AG04450 (cell line): ENCODE measurements at regions of chr17 and their contacts with region 1.

Region 1: DNA sequence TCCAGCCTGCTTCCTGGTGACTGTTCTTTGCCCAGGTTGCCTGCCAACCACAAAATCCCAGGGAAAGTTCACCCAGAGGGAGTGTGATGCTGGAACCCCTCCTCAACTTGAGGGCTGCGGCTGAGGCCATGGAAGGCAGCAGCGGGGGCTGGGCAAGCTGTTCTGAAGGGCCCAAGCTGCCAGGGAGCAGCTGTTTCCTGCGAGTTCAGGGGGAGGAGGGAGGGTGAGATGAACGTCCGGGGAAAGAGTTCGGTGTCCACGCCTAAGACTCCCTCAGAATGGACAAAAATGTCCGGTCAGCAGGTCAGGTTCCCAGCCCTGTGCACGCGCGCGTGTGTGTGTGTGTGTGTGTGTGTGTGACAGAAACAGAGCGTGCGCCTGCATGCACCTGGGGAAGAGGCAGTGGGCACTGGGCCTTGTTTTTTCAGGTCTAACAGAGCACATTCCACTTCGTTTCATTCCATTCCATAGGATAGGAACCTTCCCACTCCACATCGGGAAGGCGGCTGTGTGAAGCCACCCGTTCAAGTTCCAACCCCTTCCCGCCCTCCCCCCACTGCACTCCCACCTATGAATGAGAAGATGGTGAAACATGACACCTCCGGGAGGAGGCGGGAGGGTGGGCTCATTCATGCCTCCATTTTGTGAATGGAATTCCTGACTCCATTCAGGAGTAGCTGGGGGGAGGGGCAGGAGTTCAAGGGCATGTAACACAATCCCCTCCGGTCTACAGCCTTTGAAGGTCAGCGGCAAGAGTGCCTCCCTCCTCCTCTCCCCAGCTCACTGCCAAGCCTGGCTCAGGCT is 15.7 kb downstream of the ETV4 start:
- DNase-seq: peak; percentile 90
- H3K4me3 ChIP-seq: peak overlapping the region; percentile 48
- H3K27ac ChIP-seq: peak overlapping the region; percentile 94
- H3K27me3 ChIP-seq: no peaks in the 10 kb centered on the region
- CTCF ChIP-seq: no peak

Region 2: DNA sequence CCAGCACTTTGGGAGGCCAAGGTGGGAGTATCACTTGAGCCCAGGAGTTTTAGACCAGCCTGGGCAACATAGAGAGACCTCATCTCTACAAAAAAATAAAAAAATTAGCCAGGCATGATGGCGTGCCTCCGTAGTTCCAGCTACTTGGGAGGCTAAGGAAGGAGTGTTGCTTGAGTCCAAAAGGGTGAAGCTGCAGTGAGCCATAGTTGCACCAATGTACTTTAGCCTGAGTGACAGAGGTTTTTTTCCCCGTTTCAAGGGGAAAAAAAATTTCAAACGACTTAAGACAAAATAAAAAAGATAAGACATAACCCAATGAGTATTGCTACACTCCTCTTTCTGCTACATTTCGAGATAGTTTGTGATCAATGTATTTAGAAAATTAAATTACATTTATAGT is 39.9 kb before region 1 on chr17:
- CTCF ChIA-PET with region 1: no interaction called
- POLR2A ChIA-PET with region 1: no interaction called
- DNase-seq: no peak
- H3K4me3 ChIP-seq: no peak overlapping the region
- H3K27ac ChIP-seq: no peak overlapping the region
- H3K27me3 ChIP-seq: no peaks in the 10 kb centered on the region
- CTCF ChIP-seq: no peak

Region 3: DNA sequence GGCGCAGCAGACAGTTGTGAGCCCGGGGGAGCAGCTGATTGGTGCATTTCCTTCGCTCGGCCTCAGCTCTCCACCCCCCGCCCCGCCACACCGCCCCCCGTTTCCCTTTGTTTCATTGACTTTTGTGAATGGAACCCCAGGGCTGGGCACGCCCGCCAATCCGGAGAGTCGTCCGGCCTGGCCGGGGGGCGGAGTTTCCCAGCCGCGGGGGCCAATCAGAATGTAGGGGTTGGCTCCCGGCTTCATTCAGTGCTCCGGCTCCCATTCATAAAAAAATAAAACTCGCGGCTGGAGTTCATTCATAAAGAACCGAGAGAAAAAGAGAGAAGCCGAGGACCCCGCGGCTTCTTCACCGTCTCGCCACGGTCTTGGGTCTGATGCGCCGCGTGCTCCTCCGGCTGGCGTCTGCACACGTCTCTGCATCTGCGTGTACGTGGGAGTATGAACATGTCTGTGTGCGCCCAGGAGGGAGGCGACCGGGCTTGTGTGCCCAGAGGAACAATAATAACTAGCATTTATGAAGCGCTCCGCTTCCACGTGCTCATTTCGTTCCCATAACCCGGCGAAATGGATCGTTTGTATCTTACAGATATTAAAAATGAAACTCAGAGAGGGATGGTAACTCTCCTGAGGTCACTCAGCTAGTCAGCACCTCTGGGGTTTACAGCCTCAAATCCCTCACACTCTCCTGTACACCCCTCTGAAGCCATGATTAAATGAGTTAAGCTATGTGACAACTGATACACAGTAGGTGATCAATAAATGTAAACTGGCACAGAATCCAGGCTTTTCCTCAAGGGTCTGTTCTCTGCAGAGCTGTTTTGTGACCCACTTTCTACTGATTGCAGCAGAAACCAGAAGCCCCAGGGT is 16.1 kb after region 1 on chr17 and contains the start of gene ETV4:
- CTCF ChIA-PET with region 1: no interaction called
- POLR2A ChIA-PET with region 1: interaction called, 18 read pairs
- DNase-seq: peak; percentile 78
- H3K4me3 ChIP-seq: peak within 1 kb of the TSS; percentile 68
- H3K27ac ChIP-seq: peak within 1 kb of the TSS; percentile 81
- H3K27me3 ChIP-seq: no peaks in the 10 kb centered on the region
- CTCF ChIP-seq: no peak
- polyA plus RNA-seq, gene ETV4: 6.7 and 8.0 TPM in 2 replicates

Region 4: DNA sequence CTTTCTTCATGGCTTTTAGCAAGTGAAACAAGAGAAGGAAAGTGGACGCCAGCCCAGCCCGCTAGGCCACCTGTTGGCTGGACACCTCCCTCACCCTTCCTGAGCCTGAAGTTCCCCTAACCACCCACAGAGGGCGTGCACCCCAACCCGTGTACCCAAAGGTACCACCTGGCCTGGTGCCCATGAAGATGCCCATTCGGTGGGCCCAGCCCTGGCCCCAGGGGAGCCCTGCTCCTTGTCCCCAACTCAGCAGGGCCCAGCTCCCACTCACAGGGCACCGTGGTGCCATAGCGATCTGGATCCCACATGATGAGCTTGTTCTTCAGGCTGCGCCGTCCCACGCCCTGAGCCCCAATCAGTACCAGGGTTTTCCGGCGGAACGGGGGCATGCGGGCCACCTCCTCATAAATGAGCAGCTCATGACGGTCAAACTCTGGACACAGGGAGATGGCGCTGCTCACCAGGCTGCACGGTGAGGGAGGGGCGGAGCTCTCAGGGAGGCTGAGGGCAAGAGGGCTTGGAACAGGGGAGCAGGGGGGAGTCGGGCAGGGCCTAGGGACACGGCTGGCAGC is 350.0 kb after region 1 on chr17:
- CTCF ChIA-PET with region 1: no interaction called
- POLR2A ChIA-PET with region 1: no interaction called
- DNase-seq: no peak
- H3K4me3 ChIP-seq: no peak overlapping the region
- H3K27ac ChIP-seq: no peak overlapping the region
- H3K27me3 ChIP-seq: peaks cover 12% of the 10 kb centered on the region
- CTCF ChIP-seq: peak; percentile 57